ENCODE measurements at regions of chr5 and their contacts with region 1.

Region 1: GRCh38 chr5:139711067-139711905 is 63.1 kb downstream of the CXXC5 start:
- DNase-seq: peak in 1 of 2 experiments; percentile 82
- H3K4me3 ChIP-seq: peak overlapping the region; percentile 40 to 79 (median 54)
- H3K27ac ChIP-seq: 0 out of 2 replicates have a peak overlapping the region, but pooled peaks have one; percentile 14
- H3K4me1 ChIP-seq: peaks cover 13 to 34% (median 24%) of the 10 kb centered on the region in 4 experiments
- H3K27me3 ChIP-seq: peaks cover 0 to 11% (median 9%) of the 10 kb centered on the region in 4 experiments; a peak in 4 of 7 replicates
- CTCF ChIP-seq: peak in 2 of 3 experiments; percentile 35 to 36; a peak in 3 of 4 replicates
- EP300 ChIP-seq: 0 out of 3 replicates have a peak, but pooled peaks of 1 of the 2 experiments have one; percentile 29
- POLR2A ChIP-seq: peak in 1 of 2 experiments; percentile 40; a peak in 1 of 3 replicates
- RAD21 ChIP-seq: peak; percentile 28 to 61; a peak in 3 of 4 replicates

Region 2: DNA sequence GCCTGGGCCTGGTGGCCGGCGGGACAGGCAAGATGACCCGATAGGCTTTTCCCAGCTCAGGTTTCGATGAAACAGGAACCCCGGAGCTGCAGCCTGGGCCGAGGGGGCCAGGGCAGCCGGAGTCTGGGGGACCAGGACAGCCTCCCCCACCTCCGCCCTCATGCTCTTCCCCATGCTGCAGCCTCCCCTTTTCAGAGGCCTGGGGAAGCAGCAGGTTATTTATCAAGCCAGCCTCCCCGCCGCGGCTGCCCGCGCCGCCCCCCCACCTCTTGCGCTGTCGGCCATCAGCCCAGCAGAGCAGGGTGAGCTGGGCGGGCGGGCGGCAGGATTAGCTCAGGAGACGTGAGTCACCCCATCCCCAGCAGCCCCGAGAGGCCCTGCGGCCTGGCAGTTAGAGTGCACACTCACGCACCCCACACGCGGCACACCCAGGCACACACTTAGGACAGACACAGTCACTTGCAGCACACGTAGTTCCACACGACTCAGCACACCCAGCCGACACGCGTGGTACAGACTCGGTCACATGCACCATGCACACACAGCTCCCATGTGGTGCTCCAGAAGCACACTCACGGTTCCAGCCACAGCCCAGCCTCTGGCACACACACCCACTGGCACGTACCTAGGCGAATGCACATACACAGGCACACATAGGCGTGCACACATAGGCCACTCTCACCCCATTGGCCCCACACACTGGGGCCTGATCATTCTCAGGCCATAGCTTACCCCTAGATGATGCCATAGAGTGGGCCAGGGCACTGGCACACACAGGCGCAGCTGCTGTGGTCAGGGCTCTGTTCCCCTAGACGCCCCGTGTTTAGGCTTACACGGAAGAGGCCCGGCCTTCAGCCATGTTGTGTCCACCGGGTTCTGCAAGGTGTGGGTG is 50.1 kb before region 1 on chr5:
- CTCF ChIA-PET with region 1: interaction called, 14 read pairs
- POLR2A ChIA-PET with region 1: interaction called, 9 read pairs
- DNase-seq: no peak
- H3K4me3 ChIP-seq: no peak overlapping the region
- H3K27ac ChIP-seq: 0 out of 2 replicates have a peak overlapping the region, but pooled peaks have one; percentile 32
- H3K4me1 ChIP-seq: peaks cover 13 to 55% (median 46%) of the 10 kb centered on the region in 4 experiments
- H3K27me3 ChIP-seq: no peaks in the 10 kb centered on the region
- CTCF ChIP-seq: no peak
- EP300 ChIP-seq: no peak
- POLR2A ChIP-seq: no peak
- RAD21 ChIP-seq: no peak

Region 3: GRCh38 chr5:139684881-139685749 is 26.2 kb before region 1 on chr5:
- CTCF ChIA-PET with region 1: interaction called, 18 read pairs
- POLR2A ChIA-PET with region 1: interaction called, 67 read pairs
- DNase-seq: no peak
- H3K4me3 ChIP-seq: no peak overlapping the region
- H3K27ac ChIP-seq: no peak overlapping the region
- H3K4me1 ChIP-seq: peaks cover 37 to 67% (median 57%) of the 10 kb centered on the region in 4 experiments
- H3K27me3 ChIP-seq: no peaks in the 10 kb centered on the region
- CTCF ChIP-seq: peak in 1 of 3 experiments; percentile 27; a peak in 2 of 4 replicates
- EP300 ChIP-seq: no peak
- POLR2A ChIP-seq: no peak
- RAD21 ChIP-seq: peak in 1 of 2 experiments; percentile 25; a peak in 2 of 4 replicates

Region 4: GRCh38 chr5:139696894-139697658 is 14.2 kb before region 1 on chr5:
- CTCF ChIA-PET with region 1: interaction called, 31 read pairs
- POLR2A ChIA-PET with region 1: interaction called, 136 read pairs
- DNase-seq: no peak
- H3K4me3 ChIP-seq: peak overlapping the region; percentile 28 to 58 (median 34); a peak in 7 of 8 replicates
- H3K27ac ChIP-seq: 0 out of 2 replicates have a peak overlapping the region, but pooled peaks have one; percentile 20
- H3K4me1 ChIP-seq: peaks cover 24 to 51% (median 38%) of the 10 kb centered on the region in 4 experiments
- H3K27me3 ChIP-seq: peaks cover 0 to 4% (median under 1%) of the 10 kb centered on the region in 4 experiments; a peak in 4 of 7 replicates
- CTCF ChIP-seq: no peak
- EP300 ChIP-seq: no peak
- POLR2A ChIP-seq: peak in 1 of 2 experiments; percentile 51; a peak in 1 of 3 replicates
- RAD21 ChIP-seq: no peak

Region 5: GRCh38 chr5:139733698-139734538 is 22.6 kb after region 1 on chr5:
- CTCF ChIA-PET with region 1: interaction called, 13 read pairs
- POLR2A ChIA-PET with region 1: interaction called, 9 read pairs
- DNase-seq: peak in 1 of 2 experiments; percentile 59
- H3K4me3 ChIP-seq: no peak overlapping the region
- H3K27ac ChIP-seq: no peak overlapping the region
- H3K4me1 ChIP-seq: peaks cover 0 to 19% (median 10%) of the 10 kb centered on the region in 4 experiments; a peak in 6 of 7 replicates
- H3K27me3 ChIP-seq: no peaks in the 10 kb centered on the region
- CTCF ChIP-seq: no peak
- EP300 ChIP-seq: no peak
- POLR2A ChIP-seq: no peak
- RAD21 ChIP-seq: no peak

Region 6: DNA sequence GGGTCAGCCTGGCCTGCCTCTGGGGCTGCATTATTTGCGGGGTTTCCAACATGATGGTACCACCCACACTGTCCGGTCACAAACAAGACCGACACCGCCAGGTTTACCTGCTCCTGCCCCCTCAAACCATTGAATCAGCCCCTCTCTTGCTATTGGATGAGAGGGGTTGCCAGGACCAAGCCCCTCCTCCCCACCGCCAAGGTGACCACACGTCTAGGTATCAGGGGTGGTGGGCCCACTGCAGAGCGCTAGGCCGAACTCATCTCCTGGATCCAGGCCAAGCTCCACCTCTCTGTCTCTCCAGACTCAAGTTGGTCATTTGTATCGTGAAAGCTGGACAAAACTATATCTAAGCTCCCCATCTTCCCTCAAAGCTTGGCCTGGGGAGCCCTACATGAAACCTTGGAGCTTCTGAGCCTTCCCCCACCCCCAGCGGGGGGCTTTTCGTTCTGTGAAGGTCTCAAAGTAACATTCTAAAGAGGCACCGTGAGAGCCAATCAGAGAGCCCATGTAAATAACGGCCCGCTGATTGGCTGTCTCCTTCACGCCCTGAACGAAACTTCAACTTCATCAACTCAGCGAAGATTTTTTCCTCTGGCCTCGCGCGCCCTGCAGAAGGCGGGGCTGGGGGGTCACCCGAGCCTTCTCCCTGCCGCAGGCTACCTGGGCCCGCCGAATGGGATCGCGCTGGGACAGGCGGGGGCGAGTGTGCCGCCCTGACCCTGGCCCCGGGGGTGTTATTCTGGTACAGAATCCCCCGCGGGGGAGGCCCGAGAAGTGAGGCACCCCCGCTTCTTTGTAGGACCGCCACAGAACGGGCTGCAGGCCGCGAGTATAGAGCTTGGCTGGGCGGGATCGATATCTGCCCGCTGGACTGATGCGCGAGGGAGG is 34.8 kb after region 1 on chr5:
- CTCF ChIA-PET with region 1: interaction called, 29 read pairs
- POLR2A ChIA-PET with region 1: interaction called, 76 read pairs
- DNase-seq: peak; percentile 75 to 89
- H3K4me3 ChIP-seq: peak overlapping the region; percentile 30 to 64 (median 56)
- H3K27ac ChIP-seq: no peak overlapping the region
- H3K4me1 ChIP-seq: peaks cover 3 to 44% (median 29%) of the 10 kb centered on the region in 4 experiments
- H3K27me3 ChIP-seq: peaks cover 24 to 50% (median 42%) of the 10 kb centered on the region in 4 experiments
- CTCF ChIP-seq: no peak
- EP300 ChIP-seq: no peak
- POLR2A ChIP-seq: no peak
- RAD21 ChIP-seq: no peak